Naive thymus-derived CD4-positive, alpha-beta T cell (primary cell): ENCODE measurements at regions of chr3 and their contacts with region 1.

Region 1: DNA sequence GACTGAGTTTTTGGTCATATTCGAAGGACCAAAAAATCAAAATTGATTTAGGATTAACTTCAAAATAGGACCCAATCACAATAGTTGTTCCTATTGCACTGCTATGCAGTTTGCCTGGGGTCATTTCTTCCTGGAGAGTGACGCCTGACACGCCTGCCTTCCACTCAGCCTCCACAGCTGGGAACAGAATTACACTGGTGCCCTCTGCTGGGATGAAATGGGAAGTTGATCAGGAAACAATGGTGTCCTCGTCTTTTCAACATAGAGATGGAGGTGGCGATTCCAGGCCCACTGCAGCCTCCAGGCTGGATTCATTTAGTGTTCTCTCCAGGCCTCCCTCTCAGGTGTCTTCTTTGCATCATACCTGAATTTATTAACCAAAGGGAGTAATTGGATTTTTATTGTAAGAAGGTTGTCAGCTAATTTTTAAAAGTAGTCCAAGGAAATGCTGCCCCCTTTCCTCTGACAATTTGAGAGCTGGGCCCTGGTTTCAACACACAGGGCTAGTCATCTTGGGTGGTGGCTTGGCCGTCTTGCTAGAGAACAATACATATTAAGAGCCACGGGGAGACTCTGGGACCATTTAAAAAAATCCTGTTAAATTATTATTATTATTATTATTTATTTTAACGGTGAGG is 69.7 kb downstream of the GAP43 start:
- DNase-seq: peak; percentile 19 to 65 (median 49)
- ATAC-seq: peak; percentile 89
- H3K4me3 ChIP-seq: no peak overlapping the region
- H3K4me3 Mint-ChIP-seq: no peak overlapping the region
- H3K27ac ChIP-seq: no peak overlapping the region
- H3K27ac Mint-ChIP-seq: peak overlapping the region in 1 of 9 donors; percentile 47
- H3K4me1 ChIP-seq: no peaks in the 10 kb centered on the region
- H3K4me1 Mint-ChIP-seq: no peaks in the 10 kb centered on the region
- H3K27me3 ChIP-seq: no peaks in the 10 kb centered on the region
- H3K27me3 Mint-ChIP-seq: peaks cover 3 to 11% (median 4%) of the 10 kb centered on the region in 5 donors

Region 2: DNA sequence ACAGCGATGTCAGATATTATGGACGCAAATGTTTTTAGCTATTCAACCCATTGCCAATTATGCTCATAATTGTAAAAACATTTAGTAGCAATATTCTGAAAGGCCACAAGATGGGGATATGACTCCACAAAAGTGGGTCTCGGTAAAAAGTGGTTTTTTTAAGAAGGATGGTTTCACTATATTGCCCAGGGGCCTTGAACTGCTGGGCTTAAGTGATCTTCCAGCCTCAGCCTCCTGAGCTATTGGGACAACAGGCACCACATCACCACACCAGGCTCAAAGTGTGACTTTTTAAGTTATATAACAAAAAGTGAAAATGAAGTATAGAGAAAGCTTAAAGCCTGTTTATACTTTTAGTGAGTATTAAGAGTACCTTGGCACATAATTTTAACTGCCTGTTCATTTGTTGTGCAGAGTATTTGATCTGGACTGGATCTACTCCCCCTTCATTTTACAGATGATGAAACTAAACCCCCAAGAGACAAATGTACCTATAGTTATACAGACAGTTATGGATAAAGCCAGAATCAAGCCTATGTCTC is 1956.4 kb before region 1 on chr3:
- CTCF ChIA-PET with region 1: no interaction called
- POLR2A ChIA-PET with region 1: no interaction called
- intact Hi-C with region 1: loop called in 1 of 2 experiments (anchors 10 kb)
- DNase-seq: peak in 7 of 9 donors; percentile 49 to 71 (median 67)
- ATAC-seq: peak; percentile 93
- H3K4me3 ChIP-seq: no peak overlapping the region
- H3K4me3 Mint-ChIP-seq: no peak overlapping the region
- H3K27ac ChIP-seq: peak overlapping the region; percentile 17
- H3K27ac Mint-ChIP-seq: peak overlapping the region; percentile 18 to 85 (median 60)
- H3K4me1 ChIP-seq: peaks cover 6 to 23% of the 10 kb centered on the region in 2 donors
- H3K4me1 Mint-ChIP-seq: peaks cover 13 to 70% (median 56%) of the 10 kb centered on the region in 7 donors
- H3K27me3 ChIP-seq: no peaks in the 10 kb centered on the region
- H3K27me3 Mint-ChIP-seq: no peaks in the 10 kb centered on the region

Region 3: GRCh38 chr3:114383875-114384557 is 1309.0 kb before region 1 on chr3:
- CTCF ChIA-PET with region 1: no interaction called
- POLR2A ChIA-PET with region 1: no interaction called
- intact Hi-C with region 1: loop called in 1 of 2 experiments (anchors 5 kb)
- DNase-seq: peak; percentile 7 to 58 (median 37)
- ATAC-seq: peak; percentile 96
- H3K4me3 ChIP-seq: peak overlapping the region; percentile 57
- H3K4me3 Mint-ChIP-seq: peak overlapping the region in 8 of 10 donors; percentile 60 to 88 (median 77)
- H3K27ac ChIP-seq: no peak overlapping the region
- H3K27ac Mint-ChIP-seq: peak overlapping the region in 5 of 9 donors; percentile 27 to 73 (median 56)
- H3K4me1 ChIP-seq: peaks cover 0 to 7% of the 10 kb centered on the region in 2 donors
- H3K4me1 Mint-ChIP-seq: peaks cover 0 to 23% (median 12%) of the 10 kb centered on the region in 7 donors
- H3K27me3 ChIP-seq: no peaks in the 10 kb centered on the region
- H3K27me3 Mint-ChIP-seq: no peaks in the 10 kb centered on the region

Region 4: GRCh38 chr3:115092220-115092791 is 600.7 kb before region 1 on chr3:
- CTCF ChIA-PET with region 1: interaction called, 7 read pairs
- POLR2A ChIA-PET with region 1: no interaction called
- intact Hi-C with region 1: loop called (anchors 1 kb)
- DNase-seq: peak; percentile 24 to 62 (median 44)
- ATAC-seq: peak; percentile 76
- H3K4me3 ChIP-seq: no peak overlapping the region
- H3K4me3 Mint-ChIP-seq: no peak overlapping the region
- H3K27ac ChIP-seq: no peak overlapping the region
- H3K27ac Mint-ChIP-seq: peak overlapping the region in 5 of 9 donors; percentile 6 to 46 (median 32)
- H3K4me1 ChIP-seq: peaks cover 0 to 9% of the 10 kb centered on the region in 2 donors
- H3K4me1 Mint-ChIP-seq: peaks cover 3 to 73% (median 44%) of the 10 kb centered on the region in 7 donors
- H3K27me3 ChIP-seq: no peaks in the 10 kb centered on the region
- H3K27me3 Mint-ChIP-seq: no peaks in the 10 kb centered on the region

Region 5: DNA sequence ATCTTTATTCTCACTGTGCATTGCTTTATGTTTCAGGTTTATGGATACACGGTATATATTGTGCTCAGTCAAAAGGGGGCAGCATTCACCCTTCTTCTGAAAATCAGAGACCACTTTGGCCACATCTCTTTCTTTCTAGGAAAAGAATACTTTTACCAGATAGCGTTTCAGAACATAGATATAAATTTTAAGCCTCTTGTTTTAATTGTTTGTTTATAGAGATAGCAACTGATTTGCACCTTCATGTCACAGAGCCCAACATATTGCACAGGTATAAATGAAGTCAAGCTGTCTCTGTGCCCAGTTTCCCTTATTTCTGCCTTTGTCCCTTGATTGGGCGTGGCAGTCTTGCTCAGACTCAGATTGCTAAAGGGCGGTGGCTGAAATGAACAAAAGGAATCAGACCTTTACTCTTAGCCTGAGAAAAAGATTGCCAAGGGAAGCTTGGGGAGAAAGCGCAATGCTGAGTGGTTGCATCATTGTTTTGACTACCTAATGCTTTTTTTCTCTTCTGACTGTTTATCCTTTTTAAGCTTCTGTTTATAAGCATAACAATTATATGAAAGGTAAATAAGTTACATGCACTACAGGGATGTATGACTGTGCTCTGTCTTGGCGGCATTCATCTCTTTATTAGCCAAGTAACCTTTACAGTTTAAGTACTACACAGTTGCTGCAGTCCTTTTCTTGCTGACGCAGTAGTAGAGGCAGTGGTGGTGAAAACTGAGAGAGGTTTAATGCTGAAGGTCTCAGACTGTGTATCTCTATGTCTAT is 475.1 kb before region 1 on chr3:
- CTCF ChIA-PET with region 1: no interaction called
- POLR2A ChIA-PET with region 1: no interaction called
- intact Hi-C with region 1: loop called (anchors 1 kb)
- DNase-seq: peak in 5 of 9 donors; percentile 1 to 19 (median 3)
- ATAC-seq: peak; percentile 52
- H3K4me3 ChIP-seq: no peak overlapping the region
- H3K4me3 Mint-ChIP-seq: no peak overlapping the region
- H3K27ac ChIP-seq: no peak overlapping the region
- H3K27ac Mint-ChIP-seq: no peak overlapping the region
- H3K4me1 ChIP-seq: no peaks in the 10 kb centered on the region
- H3K4me1 Mint-ChIP-seq: no peaks in the 10 kb centered on the region
- H3K27me3 ChIP-seq: no peaks in the 10 kb centered on the region
- H3K27me3 Mint-ChIP-seq: peaks cover 0 to 17% (median 4%) of the 10 kb centered on the region in 5 donors

Region 6: DNA sequence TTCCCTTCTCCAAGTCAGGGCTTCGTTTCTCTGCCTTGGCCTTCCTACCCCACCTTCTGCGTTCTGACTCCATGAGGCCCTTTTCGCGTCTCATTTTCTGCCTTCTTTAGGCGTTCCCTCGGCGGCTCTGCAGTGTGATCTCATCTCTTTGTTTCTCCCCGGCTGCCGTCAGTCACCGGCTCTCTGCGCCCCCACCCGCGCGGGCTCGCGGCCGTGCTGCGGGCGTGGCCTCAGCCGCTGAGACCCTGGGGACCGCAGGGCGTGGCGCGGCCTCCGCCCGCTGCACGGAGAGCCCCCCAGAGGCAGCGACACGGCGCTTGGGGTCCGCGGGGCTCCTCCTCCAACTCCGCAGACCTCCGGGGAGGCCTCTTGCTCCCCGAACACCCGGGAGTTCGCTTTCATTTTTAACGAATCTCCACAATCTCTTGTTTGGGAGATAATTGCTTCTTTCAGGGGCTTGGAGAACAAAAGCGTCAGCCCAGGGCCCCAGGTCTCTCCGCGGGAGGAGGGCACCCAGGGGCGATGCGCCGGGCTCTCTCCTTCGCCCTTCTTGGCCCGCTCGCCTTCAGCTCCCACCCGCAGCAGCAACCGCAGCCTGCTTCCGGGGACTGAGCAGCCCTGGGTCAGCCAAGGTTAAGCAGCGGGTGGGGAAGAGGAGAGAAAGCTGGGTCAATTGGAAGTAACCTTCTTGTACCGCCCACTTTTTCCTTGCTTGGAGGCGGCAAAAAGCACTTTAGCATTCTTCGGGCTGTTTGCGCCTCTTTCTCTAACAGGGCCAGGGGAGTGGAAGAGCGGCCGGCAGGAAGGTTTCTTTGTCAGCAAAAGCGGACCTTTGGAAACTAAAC is 34.4 kb before region 1 on chr3:
- CTCF ChIA-PET with region 1: no interaction called
- POLR2A ChIA-PET with region 1: no interaction called
- intact Hi-C with region 1: loop called in 1 of 2 experiments (anchors 1 kb)
- DNase-seq: peak; percentile 49 to 76 (median 62)
- ATAC-seq: peak; percentile 92
- H3K4me3 ChIP-seq: peak overlapping the region; percentile 51
- H3K4me3 Mint-ChIP-seq: peak overlapping the region; percentile 81 to 99 (median 95)
- H3K27ac ChIP-seq: peak overlapping the region; percentile 60
- H3K27ac Mint-ChIP-seq: peak overlapping the region; percentile 90 to 100 (median 98)
- H3K4me1 ChIP-seq: peaks cover 5 to 13% of the 10 kb centered on the region in 2 donors
- H3K4me1 Mint-ChIP-seq: peaks cover 14 to 31% (median 24%) of the 10 kb centered on the region in 7 donors
- H3K27me3 ChIP-seq: no peaks in the 10 kb centered on the region
- H3K27me3 Mint-ChIP-seq: peaks cover 0 to 13% (median 0%) of the 10 kb centered on the region in 5 donors

Region 7: GRCh38 chr3:116000311-116000710 is 307.3 kb after region 1 on chr3:
- CTCF ChIA-PET with region 1: no interaction called
- POLR2A ChIA-PET with region 1: no interaction called
- intact Hi-C with region 1: no loop called
- DNase-seq: no peak
- ATAC-seq: no peak
- H3K4me3 ChIP-seq: no peak overlapping the region
- H3K4me3 Mint-ChIP-seq: no peak overlapping the region
- H3K27ac ChIP-seq: no peak overlapping the region
- H3K27ac Mint-ChIP-seq: no peak overlapping the region
- H3K4me1 ChIP-seq: no peaks in the 10 kb centered on the region
- H3K4me1 Mint-ChIP-seq: no peaks in the 10 kb centered on the region
- H3K27me3 ChIP-seq: no peaks in the 10 kb centered on the region
- H3K27me3 Mint-ChIP-seq: peaks cover 0 to 5% (median 0%) of the 10 kb centered on the region in 5 donors